ENCODE measurements at regions of chr14 and their contacts with region 1.

Region 1: GRCh38 chr14:64478634-64479250 is 13.4 kb downstream of the AKAP5 start:
- DNase-seq: no peak
- H3K4me3 Mint-ChIP-seq: no peak overlapping the region
- H3K27ac Mint-ChIP-seq: no peak overlapping the region
- H3K4me1 Mint-ChIP-seq: no peaks in the 10 kb centered on the region
- H3K27me3 Mint-ChIP-seq: no peaks in the 10 kb centered on the region

Region 2: GRCh38 chr14:64338616-64339316 is 140.0 kb before region 1 on chr14:
- CTCF ChIA-PET with region 1: interaction called, 35 read pairs
- DNase-seq: peak; percentile 94
- H3K4me3 Mint-ChIP-seq: peak overlapping the region; percentile 78
- H3K27ac Mint-ChIP-seq: peak overlapping the region; percentile 90
- H3K4me1 Mint-ChIP-seq: peaks cover 38% of the 10 kb centered on the region
- H3K27me3 Mint-ChIP-seq: peaks cover 4% of the 10 kb centered on the region

Region 3: DNA sequence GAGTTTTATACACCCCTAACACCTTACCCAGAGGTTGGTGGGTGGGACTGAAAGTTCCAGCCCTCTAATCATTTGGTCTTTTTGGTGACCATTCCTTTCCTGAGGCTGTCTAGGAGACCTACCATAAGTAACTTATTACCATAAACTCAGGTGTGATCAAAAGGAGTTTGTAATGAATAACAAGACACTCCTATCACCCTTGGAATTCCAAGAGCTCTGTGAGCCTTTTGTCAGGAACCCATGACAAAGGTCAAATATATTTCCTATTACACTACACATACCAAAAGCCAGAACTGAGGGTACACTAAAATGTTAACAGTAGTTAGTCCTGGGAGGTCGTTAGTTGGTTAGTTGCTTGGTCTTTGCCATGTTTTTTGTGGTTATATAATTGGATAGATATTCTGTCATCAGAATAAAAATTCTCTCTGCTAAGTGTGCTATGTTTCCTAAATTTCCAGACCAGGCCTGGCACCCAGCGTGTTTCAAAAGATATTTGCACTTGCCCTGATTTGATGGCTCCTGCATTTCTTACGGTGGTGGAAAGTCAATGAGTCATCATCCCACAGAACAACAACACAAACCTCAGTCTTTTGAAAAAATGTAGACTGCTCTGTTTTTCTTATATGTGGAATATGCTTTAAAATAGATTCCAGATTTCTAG is 40.4 kb before region 1 on chr14:
- CTCF ChIA-PET with region 1: interaction called, 36 read pairs
- DNase-seq: no peak
- H3K4me3 Mint-ChIP-seq: no peak overlapping the region
- H3K27ac Mint-ChIP-seq: no peak overlapping the region
- H3K4me1 Mint-ChIP-seq: peaks cover 10% of the 10 kb centered on the region
- H3K27me3 Mint-ChIP-seq: no peaks in the 10 kb centered on the region

Region 4: GRCh38 chr14:64450255-64450654 is 28.5 kb before region 1 on chr14:
- CTCF ChIA-PET with region 1: no interaction called
- DNase-seq: no peak
- H3K4me3 Mint-ChIP-seq: no peak overlapping the region
- H3K27ac Mint-ChIP-seq: no peak overlapping the region
- H3K4me1 Mint-ChIP-seq: peaks cover 9% of the 10 kb centered on the region
- H3K27me3 Mint-ChIP-seq: no peaks in the 10 kb centered on the region

Region 5: DNA sequence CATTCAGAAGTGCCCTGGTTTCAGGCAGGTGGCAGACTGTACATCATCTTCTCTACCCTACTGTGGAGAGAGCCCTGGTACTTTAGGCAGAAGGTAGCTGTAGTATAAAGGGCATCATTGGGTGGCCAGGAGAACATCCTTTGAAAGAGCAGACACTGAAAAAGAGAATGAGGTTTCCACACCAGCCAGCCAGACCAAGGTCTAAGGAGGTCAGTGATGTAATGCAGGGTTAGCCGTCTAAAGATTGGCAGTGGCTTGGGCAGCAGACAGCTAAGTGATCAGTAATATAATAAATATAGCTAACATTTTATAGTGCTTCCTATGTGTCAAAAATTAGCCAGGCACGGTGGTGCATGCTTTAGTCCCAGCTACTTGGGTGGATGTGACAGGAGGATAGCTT is 12.9 kb after region 1 on chr14:
- CTCF ChIA-PET with region 1: interaction called, 17 read pairs
- DNase-seq: no peak
- H3K4me3 Mint-ChIP-seq: no peak overlapping the region
- H3K27ac Mint-ChIP-seq: no peak overlapping the region
- H3K4me1 Mint-ChIP-seq: peaks cover 17% of the 10 kb centered on the region
- H3K27me3 Mint-ChIP-seq: no peaks in the 10 kb centered on the region

Region 6: DNA sequence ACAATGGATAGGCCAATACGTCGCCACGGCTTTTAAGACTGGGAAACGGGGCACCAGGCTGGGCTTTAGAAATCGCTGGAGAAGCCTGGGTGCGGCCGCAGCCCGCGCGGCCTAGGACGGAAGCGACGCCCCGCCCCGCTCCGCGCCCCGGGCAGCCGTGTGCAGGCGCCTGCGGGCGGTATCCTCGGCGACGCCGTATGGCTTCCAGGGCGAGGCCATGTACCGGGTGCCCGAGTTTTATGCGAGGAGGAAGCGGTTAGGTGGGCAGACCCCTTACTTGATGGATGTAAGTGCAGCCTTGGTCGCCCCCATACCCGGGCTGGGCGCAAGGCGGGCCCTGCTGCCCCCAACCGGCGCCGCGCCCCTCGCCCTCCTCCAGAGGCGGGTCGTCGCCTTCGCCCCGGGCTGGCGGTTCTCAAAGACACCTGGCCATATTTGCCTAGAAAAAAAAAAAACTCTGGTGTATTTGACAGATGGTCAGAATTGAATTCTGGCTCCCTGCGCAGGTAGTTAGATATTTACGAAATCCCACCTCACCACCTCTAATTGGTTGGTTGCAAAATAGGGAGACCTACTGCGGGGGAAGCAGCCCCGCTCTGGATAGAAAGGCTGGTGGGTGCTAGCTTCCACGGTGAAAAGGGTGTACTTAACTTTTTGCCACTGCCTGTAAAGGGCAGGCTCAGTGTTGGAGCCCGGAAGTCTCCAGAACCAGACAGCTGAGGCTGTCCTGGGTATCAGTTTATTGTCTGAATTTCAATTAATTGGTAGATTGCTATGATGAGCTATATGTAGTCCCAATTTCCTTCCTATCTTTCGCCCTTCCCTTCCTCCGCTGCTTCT is 71.3 kb after region 1 on chr14 and contains the start of gene PPP1R36:
- CTCF ChIA-PET with region 1: no interaction called
- DNase-seq: peak; percentile 63
- H3K4me3 Mint-ChIP-seq: peak within 1 kb of the TSS; percentile 49
- H3K27ac Mint-ChIP-seq: no peak within 1 kb of the TSS
- H3K4me1 Mint-ChIP-seq: peaks cover 15% of the 10 kb centered on the region
- H3K27me3 Mint-ChIP-seq: peaks cover 51% of the 10 kb centered on the region

Region 7: GRCh38 chr14:64625475-64626269 is 146.9 kb after region 1 on chr14:
- CTCF ChIA-PET with region 1: no interaction called
- DNase-seq: no peak
- H3K4me3 Mint-ChIP-seq: no peak overlapping the region
- H3K27ac Mint-ChIP-seq: no peak overlapping the region
- H3K4me1 Mint-ChIP-seq: peaks cover 9% of the 10 kb centered on the region
- H3K27me3 Mint-ChIP-seq: peaks cover 30% of the 10 kb centered on the region